GM18951 (cell line): ENCODE measurements at regions of chr11 and their contacts with region 1.

Region 1: DNA sequence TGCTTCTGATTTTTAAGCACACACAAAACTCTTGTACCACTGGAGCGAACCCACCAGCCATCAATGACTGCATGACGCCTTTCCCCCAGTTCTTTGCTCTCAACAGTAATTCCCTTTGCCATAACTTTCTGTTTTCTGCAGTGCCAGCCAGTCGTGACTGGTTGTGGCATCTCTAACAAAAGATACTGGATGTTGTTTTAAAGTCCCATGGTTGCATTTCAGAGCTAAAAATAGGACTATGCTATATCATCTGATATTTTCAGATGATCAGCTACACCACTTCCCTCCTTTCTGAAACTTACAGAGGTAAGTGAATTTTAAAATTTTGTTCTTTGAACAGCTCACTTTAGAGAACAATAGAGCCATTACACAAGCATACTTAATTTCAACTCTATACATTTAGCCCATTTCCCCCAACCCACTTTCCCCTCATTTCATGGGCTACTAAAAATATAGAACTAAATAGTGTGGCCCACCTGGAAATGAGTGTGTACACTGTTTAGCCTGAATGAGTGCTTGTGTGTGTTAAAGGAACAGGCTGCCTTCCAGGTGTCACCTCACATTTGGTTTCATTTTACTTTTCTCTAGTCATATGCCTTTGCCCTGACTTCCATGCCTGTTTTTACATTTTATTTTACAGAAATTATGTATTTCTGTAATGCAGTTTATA is 136.9 kb upstream of the ZC3H12C start:
- POLR2A ChIP-seq: peak; percentile 33

Region 2: DNA sequence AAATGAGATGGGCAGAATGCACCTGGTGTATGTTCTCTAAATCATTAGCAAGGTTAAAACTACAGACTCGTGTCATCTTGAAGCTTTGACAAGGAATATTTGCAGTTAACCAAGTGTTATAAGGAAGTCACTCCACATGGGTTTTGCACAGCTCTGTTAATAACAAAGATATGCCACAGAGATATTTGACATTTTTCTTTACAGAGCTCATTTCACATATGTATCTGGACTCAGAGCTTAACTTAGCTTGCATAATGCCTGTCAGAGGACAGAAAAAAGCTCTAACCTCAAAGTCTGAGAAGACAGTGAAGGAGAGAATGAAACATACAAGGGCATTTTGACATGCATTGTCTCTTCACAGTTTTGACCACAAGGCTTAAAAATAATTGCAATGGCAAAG is 428.8 kb before region 1 on chr11:
- in situ Hi-C with region 1: no loop called
- POLR2A ChIP-seq: no peak

Region 3: DNA sequence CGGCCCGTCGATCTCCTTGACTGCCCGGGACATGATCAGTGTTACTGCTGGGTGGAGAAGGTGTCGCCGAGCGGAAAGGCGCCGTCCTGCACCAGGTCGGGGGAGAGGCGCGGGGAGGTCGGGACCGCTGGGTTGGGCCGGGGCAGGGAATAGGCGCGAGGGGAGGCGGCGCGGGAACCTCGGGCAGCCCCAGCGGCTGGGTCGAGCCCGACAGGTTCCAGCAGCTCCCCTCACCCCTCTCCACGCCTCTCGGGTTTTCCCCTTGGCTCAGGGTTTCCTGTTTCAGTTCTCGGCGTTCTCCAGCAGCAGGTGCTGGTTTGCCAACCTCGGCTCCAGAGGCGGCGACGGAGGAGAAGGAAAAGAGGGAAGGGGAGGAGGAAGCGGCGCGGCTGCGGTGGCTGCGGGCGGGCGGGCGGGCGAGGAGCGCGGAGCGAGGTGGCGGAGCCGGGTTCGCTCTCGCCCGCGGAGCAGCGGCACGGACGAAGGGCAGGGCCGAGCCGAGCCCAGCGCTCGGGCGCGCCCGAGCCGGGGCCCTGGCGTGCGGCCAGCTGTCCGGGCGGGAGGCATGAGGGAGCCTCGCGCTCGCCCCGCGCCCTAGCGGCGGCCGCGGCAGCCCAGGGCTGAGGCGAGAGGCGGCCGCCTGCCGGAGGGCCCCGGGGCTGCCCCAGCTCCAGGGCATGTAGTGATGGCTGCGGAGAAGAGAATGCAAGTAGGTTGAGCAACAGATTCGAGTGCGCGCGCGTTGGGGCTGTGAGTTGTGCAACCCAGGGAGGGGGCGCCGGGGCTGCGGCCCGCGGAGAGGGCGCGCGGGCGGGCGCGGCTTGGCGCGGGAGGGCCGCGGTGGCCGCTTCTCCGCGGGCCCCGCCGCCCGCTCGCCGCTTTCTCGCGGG is 136.5 kb after region 1 on chr11 and contains the start of gene ZC3H12C:
- in situ Hi-C with region 1: loop called (anchors 10 kb)
- POLR2A ChIP-seq: peak; percentile 69

Region 4: GRCh38 chr11:110286298-110287040 is 330.2 kb after region 1 on chr11:
- in situ Hi-C with region 1: no loop called
- POLR2A ChIP-seq: no peak